CD14-positive monocyte (primary cell): ENCODE measurements at regions of chr12 and their contacts with region 1.

Region 1: GRCh38 chr12:56359851-56360767 is at the start of gene STAT2:
- DNase-seq: peak; percentile 98 to 99 (median 99)
- H3K4me3 ChIP-seq: peak within 1 kb of the TSS; percentile 89 to 97 (median 89)
- H3K4me3 Mint-ChIP-seq: peak within 1 kb of the TSS; percentile 87 to 94
- H3K27ac ChIP-seq: peak within 1 kb of the TSS; percentile 74 to 89
- H3K27ac Mint-ChIP-seq: peak within 1 kb of the TSS; percentile 87 to 97 (median 95)
- H3K4me1 ChIP-seq: peaks cover 19 to 23% of the 10 kb centered on the region in 2 donors
- H3K4me1 Mint-ChIP-seq: peaks cover 26% of the 10 kb centered on the region
- H3K27me3 ChIP-seq: no peaks in the 10 kb centered on the region
- H3K27me3 Mint-ChIP-seq: peaks cover 0 to 2% (median 1%) of the 10 kb centered on the region in 3 donors
- CTCF ChIP-seq: no peak
- polyA plus RNA-seq, gene STAT2: 109 to 251 (median 142) TPM

Region 2: GRCh38 chr12:56299853-56300643 is 60.1 kb before region 1 on chr12 and contains the start of gene CS:
- intact Hi-C with region 1: loop called in 1 of 2 experiments (anchors 2 kb)
- DNase-seq: peak; percentile 97 to 98 (median 98)
- H3K4me3 ChIP-seq: peak within 1 kb of the TSS; percentile 61 to 84 (median 66)
- H3K4me3 Mint-ChIP-seq: peak within 1 kb of the TSS; percentile 93 to 98
- H3K27ac ChIP-seq: peak within 1 kb of the TSS; percentile 84 to 95
- H3K27ac Mint-ChIP-seq: peak within 1 kb of the TSS; percentile 94 to 97 (median 97)
- H3K4me1 ChIP-seq: peaks cover 41 to 49% of the 10 kb centered on the region in 2 donors
- H3K4me1 Mint-ChIP-seq: peaks cover 50% of the 10 kb centered on the region
- H3K27me3 ChIP-seq: no peaks in the 10 kb centered on the region
- H3K27me3 Mint-ChIP-seq: peaks cover 0 to 2% (median 0%) of the 10 kb centered on the region in 3 donors
- CTCF ChIP-seq: no peak
- polyA plus RNA-seq, gene CS: 55.7 to 156 (median 86.1) TPM

Region 3: DNA sequence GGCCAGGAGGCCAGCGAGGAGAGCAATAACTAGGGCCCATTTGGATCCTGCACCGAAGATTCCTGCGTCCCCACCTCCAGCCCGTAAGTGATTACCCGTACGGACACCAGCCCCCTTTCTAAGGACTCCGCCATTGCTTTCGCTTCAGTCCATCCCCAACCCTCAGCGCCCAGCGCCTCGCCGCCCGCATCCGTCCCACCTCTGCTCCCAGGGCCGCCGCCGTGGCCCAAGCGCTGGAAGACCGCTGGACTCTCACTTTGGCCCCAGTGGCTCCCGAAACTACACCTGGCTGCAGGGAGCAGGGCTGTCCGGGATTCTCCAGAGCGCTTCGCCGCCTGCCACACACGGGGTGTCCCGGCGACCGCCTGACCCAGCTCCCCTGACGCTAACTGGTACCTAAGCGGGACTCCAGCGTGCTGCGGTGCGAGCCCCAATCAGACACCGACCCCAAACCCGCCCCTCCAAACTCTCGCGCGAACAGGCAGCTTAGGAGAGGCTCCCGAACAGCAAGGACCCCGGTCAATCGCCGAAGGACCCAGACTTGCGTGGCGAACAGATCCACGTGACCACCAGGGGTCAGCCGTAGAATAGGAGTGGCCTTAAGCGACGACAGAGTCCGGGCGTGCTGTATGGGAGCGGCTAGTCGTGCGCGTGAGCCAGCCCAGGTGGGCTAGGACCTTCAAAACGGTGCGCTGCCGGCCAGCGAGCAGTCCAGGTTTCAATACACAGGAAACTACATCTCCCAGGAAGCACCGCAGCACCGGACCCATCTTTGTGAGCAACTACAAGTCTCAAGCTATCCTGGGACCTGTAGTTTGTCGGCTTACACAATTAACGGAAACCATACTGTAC is 44.3 kb before region 1 on chr12 and contains the start of gene CNPY2:
- intact Hi-C with region 1: loop called (anchors 5 kb)
- DNase-seq: peak; percentile 87 to 93 (median 92)
- H3K4me3 ChIP-seq: peak within 1 kb of the TSS; percentile 59 to 96 (median 95)
- H3K4me3 Mint-ChIP-seq: peak within 1 kb of the TSS; percentile 96 to 97
- H3K27ac ChIP-seq: peak within 1 kb of the TSS; percentile 91 to 98
- H3K27ac Mint-ChIP-seq: peak within 1 kb of the TSS; percentile 98 to 100 (median 98)
- H3K4me1 ChIP-seq: peaks cover 14 to 20% of the 10 kb centered on the region in 2 donors
- H3K4me1 Mint-ChIP-seq: peaks cover 19% of the 10 kb centered on the region
- H3K27me3 ChIP-seq: no peaks in the 10 kb centered on the region
- H3K27me3 Mint-ChIP-seq: no peaks in the 10 kb centered on the region
- CTCF ChIP-seq: no peak
- polyA plus RNA-seq, gene CNPY2: 50.4 to 122 (median 121) TPM

Region 4: GRCh38 chr12:56450241-56450640 is 90.1 kb after region 1 on chr12:
- intact Hi-C with region 1: loop called in 1 of 2 experiments (anchors 10 kb)
- DNase-seq: no peak
- H3K4me3 ChIP-seq: peak overlapping the region in 1 of 3 experiments; percentile 96
- H3K4me3 Mint-ChIP-seq: no peak overlapping the region
- H3K27ac ChIP-seq: no peak overlapping the region
- H3K27ac Mint-ChIP-seq: peak overlapping the region in 1 of 7 donors; percentile 92
- H3K4me1 ChIP-seq: peaks cover 15 to 21% of the 10 kb centered on the region in 2 donors
- H3K4me1 Mint-ChIP-seq: peaks cover 21% of the 10 kb centered on the region
- H3K27me3 ChIP-seq: no peaks in the 10 kb centered on the region
- H3K27me3 Mint-ChIP-seq: peaks cover 0 to 2% (median 0%) of the 10 kb centered on the region in 3 donors
- CTCF ChIP-seq: no peak

Region 5: GRCh38 chr12:56468216-56469006 is 108.3 kb after region 1 on chr12 and contains the start of gene SPRYD4:
- intact Hi-C with region 1: loop called in 1 of 2 experiments (anchors 10 kb)
- DNase-seq: peak; percentile 94
- H3K4me3 ChIP-seq: peak within 1 kb of the TSS; percentile 89 to 94 (median 92)
- H3K4me3 Mint-ChIP-seq: peak within 1 kb of the TSS; percentile 88 to 96
- H3K27ac ChIP-seq: peak within 1 kb of the TSS; percentile 71 to 93
- H3K27ac Mint-ChIP-seq: peak within 1 kb of the TSS; percentile 89 to 97 (median 94)
- H3K4me1 ChIP-seq: peaks cover 27 to 31% of the 10 kb centered on the region in 2 donors
- H3K4me1 Mint-ChIP-seq: peaks cover 30% of the 10 kb centered on the region
- H3K27me3 ChIP-seq: no peaks in the 10 kb centered on the region
- H3K27me3 Mint-ChIP-seq: peaks cover 0 to 2% (median 0%) of the 10 kb centered on the region in 3 donors
- CTCF ChIP-seq: no peak
- polyA plus RNA-seq, gene SPRYD4: 1.3 to 2.1 (median 1.4) TPM